Calu3 (cell line): ENCODE measurements at regions of chr3 and their contacts with region 1.

Region 1: DNA sequence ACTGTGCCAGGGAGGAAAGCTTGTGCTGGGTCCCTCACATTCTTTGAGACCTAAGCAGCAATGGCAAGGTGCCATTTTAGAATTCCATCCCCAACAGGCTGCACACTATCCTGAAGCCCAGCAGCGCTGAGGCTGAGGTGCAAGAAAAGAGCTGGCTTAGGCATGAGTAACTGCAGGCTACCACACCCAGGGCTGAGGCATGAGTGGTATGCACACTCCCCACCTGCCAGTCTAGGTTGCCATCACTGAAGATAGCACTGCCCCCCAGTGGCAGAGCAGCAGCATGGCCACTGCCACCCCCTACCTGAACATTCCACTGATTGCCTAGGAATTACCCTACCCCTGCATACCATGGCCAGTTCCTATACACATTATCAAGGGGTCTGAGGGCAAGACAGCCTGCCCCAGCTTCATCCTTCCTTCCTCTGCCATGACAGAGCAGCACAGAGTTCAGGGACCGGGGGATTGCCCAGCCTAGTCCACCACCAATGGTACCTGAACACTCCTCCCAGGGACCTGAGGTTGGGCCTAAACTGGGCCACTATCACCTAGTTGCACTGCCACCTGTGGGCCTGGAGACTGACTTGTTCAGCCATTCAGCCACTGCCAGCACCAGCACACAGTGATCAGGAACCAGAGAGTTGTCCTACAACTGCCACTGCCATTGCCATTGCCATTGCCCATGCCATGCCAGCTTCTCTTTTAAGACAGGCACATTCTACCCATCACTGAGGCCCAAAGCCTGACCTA is 129.8 kb downstream of the SATB1 start:
- DNase-seq: peak; percentile 91
- H3K4me3 Mint-ChIP-seq: no peak overlapping the region
- H3K27ac Mint-ChIP-seq: peak overlapping the region; percentile 59
- H3K4me1 Mint-ChIP-seq: peaks cover 9% of the 10 kb centered on the region
- H3K27me3 Mint-ChIP-seq: no peaks in the 10 kb centered on the region
- CTCF ChIP-seq: peak; percentile 83

Region 2: DNA sequence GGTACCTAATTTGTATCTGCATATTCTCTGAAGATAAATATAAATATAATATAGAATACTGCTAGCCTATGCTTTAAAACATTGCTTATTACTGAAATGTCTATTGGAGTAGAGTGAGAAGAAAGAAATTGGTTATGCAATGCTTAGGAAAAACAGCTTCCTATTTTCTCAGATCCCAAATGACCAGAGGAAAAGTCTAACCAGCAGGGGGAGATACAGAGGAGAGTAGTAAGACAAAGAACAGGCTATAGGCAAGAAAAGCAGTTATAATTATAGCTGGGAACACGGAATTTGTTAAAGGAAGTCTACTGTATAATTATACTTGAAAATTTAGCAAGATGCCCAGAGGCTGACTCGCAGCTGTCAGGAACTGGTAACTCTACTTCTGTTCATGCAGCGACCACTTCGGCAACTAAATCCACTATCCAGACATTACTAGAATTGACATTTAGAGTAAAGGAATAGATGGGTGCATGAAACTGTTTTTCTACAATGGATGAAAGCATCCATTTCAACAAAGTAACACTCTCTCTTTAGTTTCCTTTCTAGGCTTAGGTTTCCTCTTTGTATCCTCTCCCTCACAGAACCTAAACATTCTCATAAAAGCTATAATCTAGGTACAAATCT is 650.2 kb before region 1 on chr3:
- CTCF ChIA-PET with region 1: no interaction called
- intact Hi-C with region 1: loop called (anchors 2 kb)
- DNase-seq: peak; percentile 40
- H3K4me3 Mint-ChIP-seq: no peak overlapping the region
- H3K27ac Mint-ChIP-seq: no peak overlapping the region
- H3K4me1 Mint-ChIP-seq: no peaks in the 10 kb centered on the region
- H3K27me3 Mint-ChIP-seq: no peaks in the 10 kb centered on the region
- CTCF ChIP-seq: peak; percentile 48

Region 3: GRCh38 chr3:17894434-17895060 is 400.8 kb before region 1 on chr3:
- CTCF ChIA-PET with region 1: interaction called, 23 read pairs
- intact Hi-C with region 1: loop called (anchors 1 kb)
- DNase-seq: peak; percentile 70
- H3K4me3 Mint-ChIP-seq: no peak overlapping the region
- H3K27ac Mint-ChIP-seq: no peak overlapping the region
- H3K4me1 Mint-ChIP-seq: peaks cover 12% of the 10 kb centered on the region
- H3K27me3 Mint-ChIP-seq: no peaks in the 10 kb centered on the region
- CTCF ChIP-seq: peak; percentile 56

Region 4: GRCh38 chr3:17979252-17979651 is 316.1 kb before region 1 on chr3:
- CTCF ChIA-PET with region 1: no interaction called
- intact Hi-C with region 1: loop called (anchors 10 kb)
- DNase-seq: no peak
- H3K4me3 Mint-ChIP-seq: no peak overlapping the region
- H3K27ac Mint-ChIP-seq: no peak overlapping the region
- H3K4me1 Mint-ChIP-seq: no peaks in the 10 kb centered on the region
- H3K27me3 Mint-ChIP-seq: no peaks in the 10 kb centered on the region
- CTCF ChIP-seq: no peak

Region 5: GRCh38 chr3:18098960-18099587 is 196.3 kb before region 1 on chr3:
- CTCF ChIA-PET with region 1: no interaction called
- intact Hi-C with region 1: loop called (anchors 1 kb)
- DNase-seq: peak; percentile 85
- H3K4me3 Mint-ChIP-seq: peak overlapping the region; percentile 14
- H3K27ac Mint-ChIP-seq: peak overlapping the region; percentile 94
- H3K4me1 Mint-ChIP-seq: peaks cover 33% of the 10 kb centered on the region
- H3K27me3 Mint-ChIP-seq: no peaks in the 10 kb centered on the region
- CTCF ChIP-seq: no peak

Region 6: GRCh38 chr3:18153571-18154173 is 141.7 kb before region 1 on chr3:
- CTCF ChIA-PET with region 1: no interaction called
- intact Hi-C with region 1: loop called (anchors 10 kb)
- DNase-seq: peak; percentile 56
- H3K4me3 Mint-ChIP-seq: peak overlapping the region; percentile 5
- H3K27ac Mint-ChIP-seq: peak overlapping the region; percentile 19
- H3K4me1 Mint-ChIP-seq: peaks cover 23% of the 10 kb centered on the region
- H3K27me3 Mint-ChIP-seq: no peaks in the 10 kb centered on the region
- CTCF ChIP-seq: no peak